HEK293 (cell line): ENCODE measurements at regions of chr15 and their contacts with region 1.

Region 1: GRCh38 chr15:60115579-60116380 is 111.7 kb downstream of the FOXB1 start:
- H3K4me3 ChIP-seq: no peak overlapping the region
- H3K27ac ChIP-seq: peak overlapping the region; percentile 52
- H3K4me1 ChIP-seq: 0 out of 2 replicates have a peak, but pooled peaks cover 5% of the 10 kb centered on the region
- CTCF ChIP-seq: no peak

Region 2: GRCh38 chr15:60128000-60128376 is 12.2 kb after region 1 on chr15:
- CTCF ChIA-PET with region 1: interaction called, 12 read pairs
- POLR2A ChIA-PET with region 1: no interaction called
- H3K4me3 ChIP-seq: peak overlapping the region; percentile 19; the same call in 1 of the 2 replicates
- H3K27ac ChIP-seq: peak overlapping the region; percentile 66
- H3K4me1 ChIP-seq: peaks cover 3% of the 10 kb centered on the region; the same call in 1 of the 2 replicates
- CTCF ChIP-seq: no peak

Region 3: DNA sequence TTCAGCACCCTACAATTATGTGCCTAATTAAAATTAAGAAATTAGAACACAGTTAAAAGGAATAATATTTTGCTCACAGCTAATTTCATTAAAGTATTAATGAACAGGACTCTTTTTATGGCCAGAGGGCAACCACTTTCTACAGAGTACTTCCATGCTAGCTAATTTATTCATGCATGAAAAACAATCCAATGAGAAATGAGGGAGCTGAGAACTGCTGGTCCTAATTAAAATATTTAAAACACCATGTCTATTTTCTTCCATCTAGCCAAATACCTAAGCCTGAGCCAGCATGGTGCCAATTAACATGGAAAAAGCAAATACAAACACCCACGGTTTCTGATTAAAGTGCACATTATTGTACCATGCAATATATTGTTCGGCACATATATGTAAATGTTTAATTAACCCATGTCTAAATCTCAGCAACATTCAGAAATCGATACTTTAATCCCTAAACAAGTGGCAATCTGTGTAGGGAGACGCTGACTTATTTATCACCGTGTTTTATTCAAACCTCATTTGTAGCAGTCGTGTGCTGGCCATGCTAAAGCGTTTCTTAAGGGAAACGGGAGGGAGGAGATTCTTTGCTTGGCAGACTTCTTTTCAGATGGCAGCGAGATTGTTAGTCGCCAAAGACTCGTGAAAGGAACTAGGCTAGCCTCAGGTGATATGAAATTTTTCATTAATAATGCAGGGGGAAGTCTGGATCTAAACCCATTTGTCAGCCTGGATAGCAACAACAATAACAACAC is 88.5 kb after region 1 on chr15:
- CTCF ChIA-PET with region 1: no interaction called
- POLR2A ChIA-PET with region 1: no interaction called
- H3K4me3 ChIP-seq: no peak overlapping the region
- H3K27ac ChIP-seq: no peak overlapping the region
- H3K4me1 ChIP-seq: no peaks in the 10 kb centered on the region
- CTCF ChIP-seq: no peak